Posterior cingulate gyrus (tissue), 11 donors: ENCODE measurements at regions of chr11 and their contacts with region 1.

Region 1: DNA sequence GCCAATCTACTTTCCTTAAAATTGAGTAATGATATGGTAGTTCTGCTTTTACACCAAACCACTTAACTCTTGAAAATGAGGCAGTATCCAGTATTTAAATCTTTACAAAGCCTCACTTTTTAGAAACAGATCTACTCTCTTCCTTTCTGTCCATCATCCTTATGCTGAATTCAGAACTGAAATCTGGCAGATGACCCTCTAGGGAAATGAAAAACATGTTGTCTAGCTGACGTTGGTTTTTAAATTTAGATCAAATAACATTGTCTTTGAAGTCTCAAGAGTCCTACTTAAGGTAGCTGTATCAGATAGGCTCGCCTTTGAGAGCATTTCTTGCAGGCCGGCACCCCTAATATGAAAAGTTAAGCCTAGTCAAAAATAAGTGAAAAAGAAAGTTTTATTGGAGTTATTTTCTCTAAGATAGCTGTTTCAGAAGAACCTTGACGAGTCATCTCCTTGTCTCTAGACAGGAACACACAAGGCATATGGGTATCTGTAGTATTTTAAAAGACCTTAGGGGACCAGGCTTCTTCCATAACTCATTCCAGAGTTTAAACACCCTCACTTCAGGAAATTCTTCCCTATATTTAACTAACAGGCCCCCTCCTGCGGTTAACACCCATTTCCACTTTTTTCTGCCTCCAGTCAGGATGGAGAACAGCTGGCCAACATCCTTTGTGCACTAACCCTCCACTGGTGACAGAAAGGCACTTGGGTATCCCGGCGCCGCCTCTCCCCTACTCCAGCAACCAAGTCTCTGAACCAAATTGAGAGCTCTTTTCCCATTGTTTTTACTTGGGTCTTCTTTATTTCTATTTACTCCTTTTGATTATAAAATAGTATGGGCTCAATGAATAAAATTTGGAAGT is 81.2 kb downstream of the WNT11 start:
- DNase-seq: no peak

Region 2: GRCh38 chr11:75993126-75993525 is 132.0 kb before region 1 on chr11:
- intact Hi-C with region 1: loop called (anchors 5 kb)
- DNase-seq: no peak

Region 3: DNA sequence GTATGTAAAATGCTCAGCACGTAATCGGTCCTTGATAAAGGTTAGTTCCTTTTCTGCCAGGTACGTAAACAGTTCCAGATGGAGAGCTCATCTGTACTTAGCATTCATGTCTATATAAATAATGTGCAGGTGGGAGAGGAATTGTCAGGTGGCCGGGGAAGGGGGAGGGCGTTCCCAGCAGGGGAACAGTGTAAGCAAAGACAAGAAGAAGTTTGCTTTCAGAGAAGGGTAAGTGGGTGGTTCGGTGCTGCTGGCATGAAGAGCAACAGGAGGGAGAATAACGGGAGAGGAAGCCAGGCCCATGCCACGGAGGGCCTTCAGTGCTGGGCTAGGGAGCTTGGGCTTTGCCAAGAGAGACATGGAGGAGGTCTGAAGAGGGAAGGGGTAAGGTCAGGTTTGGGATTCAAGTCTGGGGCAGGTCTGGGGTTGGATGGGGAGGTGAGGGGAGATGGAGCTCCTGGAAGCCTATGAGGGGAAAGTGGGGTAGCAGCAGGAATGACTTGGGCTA is 92.6 kb after region 1 on chr11:
- intact Hi-C with region 1: no loop called
- DNase-seq: peak in 2 of 10 donors; percentile 16 to 66